Breast epithelium (tissue), 4 donors: ENCODE measurements at regions of chr9 and their contacts with region 1.

Region 1: GRCh38 chr9:107465467-107466451 is 23.8 kb downstream of the KLF4 start:
- DNase-seq: peak; percentile 21 to 67
- H3K4me3 ChIP-seq: peak overlapping the region; percentile 48 to 79 (median 55)
- H3K27ac ChIP-seq: no peak overlapping the region
- H3K4me1 ChIP-seq: no peaks in the 10 kb centered on the region
- H3K27me3 ChIP-seq: no peaks in the 10 kb centered on the region
- CTCF ChIP-seq: peak; percentile 56 to 84 (median 75)
- POLR2A ChIP-seq: no peak

Region 2: GRCh38 chr9:107942872-107943271 is 477.1 kb after region 1 on chr9:
- intact Hi-C with region 1: no loop called
- DNase-seq: no peak
- H3K4me3 ChIP-seq: no peak overlapping the region
- H3K27ac ChIP-seq: no peak overlapping the region
- H3K4me1 ChIP-seq: no peaks in the 10 kb centered on the region
- H3K27me3 ChIP-seq: no peaks in the 10 kb centered on the region
- CTCF ChIP-seq: no peak
- POLR2A ChIP-seq: no peak

Region 3: DNA sequence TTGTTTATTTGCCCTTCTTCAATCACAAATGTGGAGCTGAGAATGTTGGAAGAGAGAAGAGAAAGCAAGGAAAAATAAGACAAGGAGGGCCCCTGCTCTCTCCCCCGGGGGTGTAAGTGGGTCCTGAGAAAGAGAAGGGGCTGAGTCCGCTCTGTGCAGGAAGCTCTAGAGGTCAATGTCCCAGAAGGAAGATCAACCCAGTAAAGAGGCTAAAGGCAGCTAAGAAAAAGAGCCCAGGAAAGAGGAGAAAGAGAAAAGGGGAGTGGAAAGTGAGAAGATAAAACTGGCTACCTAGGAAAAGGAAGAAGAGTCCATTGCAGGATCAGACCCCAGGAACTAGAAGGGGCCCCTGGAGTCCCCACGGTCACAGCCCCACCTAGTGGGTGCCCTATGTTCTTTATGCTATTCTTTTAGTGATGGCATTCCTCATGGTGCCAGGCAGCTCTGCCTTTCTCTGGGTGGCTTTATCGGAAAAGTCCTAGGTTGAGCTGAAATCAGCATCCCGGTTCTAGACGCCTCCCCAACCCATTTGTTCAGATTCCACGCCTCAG is 806.7 kb after region 1 on chr9:
- intact Hi-C with region 1: loop called (anchors 10 kb)
- DNase-seq: peak in 1 of 2 donors; percentile 29
- H3K4me3 ChIP-seq: peak overlapping the region in 2 of 3 donors; percentile 21 to 34
- H3K27ac ChIP-seq: peak overlapping the region; percentile 19 to 76
- H3K4me1 ChIP-seq: no peaks in the 10 kb centered on the region
- H3K27me3 ChIP-seq: no peaks in the 10 kb centered on the region
- CTCF ChIP-seq: peak in 2 of 3 donors; percentile 52 to 54
- POLR2A ChIP-seq: no peak

Region 4: GRCh38 chr9:108339251-108339650 is 873.5 kb after region 1 on chr9:
- intact Hi-C with region 1: no loop called
- DNase-seq: no peak
- H3K4me3 ChIP-seq: no peak overlapping the region
- H3K27ac ChIP-seq: no peak overlapping the region
- H3K4me1 ChIP-seq: no peaks in the 10 kb centered on the region
- H3K27me3 ChIP-seq: no peaks in the 10 kb centered on the region
- CTCF ChIP-seq: no peak
- POLR2A ChIP-seq: no peak